Aorta (tissue), 5 donors: ENCODE measurements at regions of chr20 and their contacts with region 1.

Region 1: DNA sequence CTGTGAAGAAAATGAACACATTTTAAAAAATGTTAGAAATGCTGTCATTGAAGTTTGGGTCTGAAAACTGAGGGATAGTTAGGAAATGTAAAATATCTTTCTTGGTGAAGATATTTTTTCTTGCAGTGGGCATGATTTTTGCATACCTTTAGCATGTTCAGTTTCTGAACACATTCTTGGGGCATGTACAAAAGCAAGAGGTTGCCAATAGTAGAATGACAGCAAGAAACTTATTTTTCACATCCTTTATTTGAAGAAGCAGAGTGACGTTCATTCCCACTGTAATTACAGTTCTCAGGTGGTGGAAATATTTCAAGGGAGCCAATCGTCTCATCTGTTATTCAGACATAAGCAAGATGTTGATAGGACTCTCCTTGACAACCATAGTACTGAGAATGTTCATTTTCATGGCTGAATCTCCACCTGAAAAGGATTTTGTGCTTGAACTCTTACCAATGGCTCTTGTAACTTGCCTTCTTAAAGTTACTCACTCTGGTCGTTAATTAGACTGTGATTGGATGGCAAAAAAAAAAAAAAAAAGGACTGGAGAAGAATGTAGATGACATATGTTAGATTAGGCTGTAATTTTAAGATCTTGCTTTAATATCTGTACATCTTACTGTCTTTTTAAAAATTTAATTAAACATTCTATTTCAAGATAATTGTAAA is 74.4 kb downstream of the DOK5 start:
- DNase-seq: no peak
- ATAC-seq: no peak
- H3K4me3 ChIP-seq: no peak overlapping the region
- H3K27ac ChIP-seq: no peak overlapping the region
- H3K4me1 ChIP-seq: peaks cover 0 to 5% of the 10 kb centered on the region in 2 donors
- H3K27me3 ChIP-seq: no peaks in the 10 kb centered on the region

Region 2: GRCh38 chr20:54345301-54345724 is 204.5 kb before region 1 on chr20:
- intact Hi-C with region 1: loop called in 1 of 2 experiments (anchors 10 kb)
- DNase-seq: no peak
- ATAC-seq: peak; percentile 72
- H3K4me3 ChIP-seq: no peak overlapping the region
- H3K27ac ChIP-seq: no peak overlapping the region
- H3K4me1 ChIP-seq: no peaks in the 10 kb centered on the region
- H3K27me3 ChIP-seq: no peaks in the 10 kb centered on the region